B cell (primary cell): ENCODE measurements at regions of chr14 and their contacts with region 1.

Region 1: DNA sequence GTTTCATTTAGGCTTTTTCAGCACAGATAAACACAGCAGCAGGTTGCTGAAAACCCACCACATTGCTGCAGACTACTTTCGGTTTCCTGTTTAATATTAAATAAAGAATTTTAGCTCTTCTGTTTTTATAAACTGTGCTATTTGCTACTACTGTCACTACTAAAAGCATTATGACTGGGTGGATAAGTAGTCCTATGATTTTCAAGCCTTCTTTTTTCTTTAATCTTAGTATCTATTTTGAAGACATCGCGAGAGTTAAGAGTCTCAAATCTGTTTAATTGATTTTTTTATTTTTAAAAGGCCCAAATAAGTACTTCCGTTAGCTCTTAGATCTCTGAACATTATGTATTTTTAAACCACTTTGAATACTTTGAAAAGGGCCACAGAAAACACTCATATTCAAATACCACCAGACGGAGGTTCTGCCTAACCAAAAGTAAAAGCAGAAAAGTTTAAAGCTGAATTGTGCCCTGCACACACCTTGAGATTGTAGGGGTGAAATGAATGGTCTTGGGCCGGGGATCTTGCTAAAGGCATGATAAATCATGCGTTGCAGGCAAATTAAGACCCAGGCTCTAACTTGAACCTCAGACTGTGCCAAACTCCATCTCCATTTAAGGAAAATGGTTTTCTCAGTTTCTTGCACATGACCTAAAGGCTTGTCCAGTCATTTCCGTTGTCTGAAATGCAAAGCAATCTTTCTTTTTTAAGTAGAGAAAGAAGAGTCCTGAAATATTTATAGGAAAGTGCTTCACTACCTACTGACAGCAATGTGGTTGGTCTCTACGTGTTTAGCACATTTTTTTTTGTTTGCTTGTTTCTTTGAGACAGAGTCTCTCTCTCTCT is 13.6 kb upstream of the FOXN3 start:
- DNase-seq: peak; percentile 93
- ATAC-seq: peak; percentile 92
- H3K4me3 ChIP-seq: peak overlapping the region; percentile 49 to 88 (median 64)
- H3K4me3 Mint-ChIP-seq: peak overlapping the region; percentile 86
- H3K27ac ChIP-seq: peak overlapping the region; percentile 82 to 86
- H3K27ac Mint-ChIP-seq: peak overlapping the region; percentile 86
- H3K4me1 ChIP-seq: peaks cover 69 to 76% of the 10 kb centered on the region in 2 donors
- H3K4me1 Mint-ChIP-seq: peaks cover 71% of the 10 kb centered on the region
- H3K27me3 ChIP-seq: no peaks in the 10 kb centered on the region
- H3K27me3 Mint-ChIP-seq: no peaks in the 10 kb centered on the region
- CTCF ChIP-seq: no peak

Region 2: GRCh38 chr14:89303457-89304435 is 126.9 kb before region 1 on chr14:
- CTCF ChIA-PET with region 1: no interaction called
- POLR2A ChIA-PET with region 1: interaction called, 4 read pairs
- intact Hi-C with region 1: loop called (anchors 1 kb)
- DNase-seq: peak; percentile 90
- ATAC-seq: peak; percentile 69
- H3K4me3 ChIP-seq: peak overlapping the region; percentile 26 to 61 (median 47)
- H3K4me3 Mint-ChIP-seq: peak overlapping the region; percentile 95
- H3K27ac ChIP-seq: peak overlapping the region; percentile 93 to 99
- H3K27ac Mint-ChIP-seq: peak overlapping the region; percentile 100
- H3K4me1 ChIP-seq: peaks cover 66 to 75% of the 10 kb centered on the region in 2 donors
- H3K4me1 Mint-ChIP-seq: peaks cover 77% of the 10 kb centered on the region
- H3K27me3 ChIP-seq: no peaks in the 10 kb centered on the region
- H3K27me3 Mint-ChIP-seq: no peaks in the 10 kb centered on the region
- CTCF ChIP-seq: no peak

Region 3: GRCh38 chr14:89365061-89365801 is 65.4 kb before region 1 on chr14:
- CTCF ChIA-PET with region 1: no interaction called
- POLR2A ChIA-PET with region 1: no interaction called
- intact Hi-C with region 1: loop called (anchors 1 kb)
- DNase-seq: peak; percentile 87
- ATAC-seq: peak; percentile 93
- H3K4me3 ChIP-seq: peak overlapping the region; percentile 29 to 60 (median 51)
- H3K4me3 Mint-ChIP-seq: peak overlapping the region; percentile 84
- H3K27ac ChIP-seq: peak overlapping the region; percentile 86 to 92
- H3K27ac Mint-ChIP-seq: peak overlapping the region; percentile 90
- H3K4me1 ChIP-seq: peaks cover 43 to 52% of the 10 kb centered on the region in 2 donors
- H3K4me1 Mint-ChIP-seq: peaks cover 57% of the 10 kb centered on the region
- H3K27me3 ChIP-seq: no peaks in the 10 kb centered on the region
- H3K27me3 Mint-ChIP-seq: no peaks in the 10 kb centered on the region
- CTCF ChIP-seq: no peak

Region 4: GRCh38 chr14:89445273-89445973 is 14.8 kb after region 1 on chr14:
- CTCF ChIA-PET with region 1: interaction called, 3 read pairs
- POLR2A ChIA-PET with region 1: no interaction called
- intact Hi-C with region 1: loop called (anchors 1 kb)
- DNase-seq: peak; percentile 40
- ATAC-seq: peak; percentile 50
- H3K4me3 ChIP-seq: no peak overlapping the region
- H3K4me3 Mint-ChIP-seq: peak overlapping the region; percentile 45
- H3K27ac ChIP-seq: peak overlapping the region; percentile 71 to 89
- H3K27ac Mint-ChIP-seq: peak overlapping the region; percentile 75
- H3K4me1 ChIP-seq: peaks cover 61 to 70% of the 10 kb centered on the region in 2 donors
- H3K4me1 Mint-ChIP-seq: peaks cover 74% of the 10 kb centered on the region
- H3K27me3 ChIP-seq: no peaks in the 10 kb centered on the region
- H3K27me3 Mint-ChIP-seq: no peaks in the 10 kb centered on the region
- CTCF ChIP-seq: no peak

Region 5: GRCh38 chr14:89493877-89494634 is 63.4 kb after region 1 on chr14:
- CTCF ChIA-PET with region 1: no interaction called
- POLR2A ChIA-PET with region 1: interaction called, 5 read pairs
- intact Hi-C with region 1: loop called (anchors 1 kb)
- DNase-seq: peak; percentile 92
- ATAC-seq: peak; percentile 99
- H3K4me3 ChIP-seq: peak overlapping the region in 4 of 5 experiments; percentile 3 to 46 (median 22)
- H3K4me3 Mint-ChIP-seq: peak overlapping the region; percentile 74
- H3K27ac ChIP-seq: peak overlapping the region; percentile 35 to 77
- H3K27ac Mint-ChIP-seq: peak overlapping the region; percentile 76
- H3K4me1 ChIP-seq: peaks cover 20 to 21% of the 10 kb centered on the region in 2 donors
- H3K4me1 Mint-ChIP-seq: peaks cover 29% of the 10 kb centered on the region
- H3K27me3 ChIP-seq: no peaks in the 10 kb centered on the region
- H3K27me3 Mint-ChIP-seq: no peaks in the 10 kb centered on the region
- CTCF ChIP-seq: no peak

Region 6: GRCh38 chr14:89701211-89702043 is 270.8 kb after region 1 on chr14:
- CTCF ChIA-PET with region 1: no interaction called
- POLR2A ChIA-PET with region 1: interaction called, 3 read pairs
- intact Hi-C with region 1: loop called (anchors 1 kb)
- DNase-seq: peak; percentile 90
- ATAC-seq: peak; percentile 96
- H3K4me3 ChIP-seq: peak overlapping the region; percentile 4 to 80 (median 62)
- H3K4me3 Mint-ChIP-seq: peak overlapping the region; percentile 88
- H3K27ac ChIP-seq: peak overlapping the region; percentile 28 to 71
- H3K27ac Mint-ChIP-seq: peak overlapping the region; percentile 85
- H3K4me1 ChIP-seq: peaks cover 25% of the 10 kb centered on the region in 2 donors
- H3K4me1 Mint-ChIP-seq: peaks cover 25% of the 10 kb centered on the region
- H3K27me3 ChIP-seq: no peaks in the 10 kb centered on the region
- H3K27me3 Mint-ChIP-seq: no peaks in the 10 kb centered on the region
- CTCF ChIP-seq: no peak

Region 7: DNA sequence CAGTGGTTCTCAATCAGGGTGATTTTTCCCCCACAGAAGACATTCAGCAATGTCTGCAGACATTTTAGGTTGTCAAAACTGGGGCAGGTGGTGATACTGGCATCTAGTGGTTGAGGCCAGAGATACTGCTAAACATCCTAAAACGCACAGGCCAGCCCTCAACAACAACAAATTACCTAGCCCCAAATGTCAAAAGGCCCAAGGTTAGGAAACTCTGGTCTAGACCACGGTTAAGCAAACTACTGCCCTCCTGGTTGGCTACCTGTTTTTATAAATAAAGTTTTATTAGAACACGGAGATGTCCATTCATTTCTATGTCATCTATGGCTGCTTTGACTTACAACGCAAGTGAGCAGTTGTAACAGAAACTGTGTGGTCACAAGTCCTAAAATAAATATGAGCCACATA is 337.3 kb after region 1 on chr14:
- CTCF ChIA-PET with region 1: interaction called, 3 read pairs
- POLR2A ChIA-PET with region 1: no interaction called
- intact Hi-C with region 1: loop called (anchors 5 kb)
- DNase-seq: peak; percentile 83
- ATAC-seq: peak; percentile 88
- H3K4me3 ChIP-seq: peak overlapping the region in 1 of 5 experiments; percentile 23
- H3K4me3 Mint-ChIP-seq: peak overlapping the region; percentile 26
- H3K27ac ChIP-seq: peak overlapping the region in 1 of 2 donors; percentile 52
- H3K27ac Mint-ChIP-seq: peak overlapping the region; percentile 54
- H3K4me1 ChIP-seq: peaks cover 17 to 19% of the 10 kb centered on the region in 2 donors
- H3K4me1 Mint-ChIP-seq: peaks cover 29% of the 10 kb centered on the region
- H3K27me3 ChIP-seq: no peaks in the 10 kb centered on the region
- H3K27me3 Mint-ChIP-seq: no peaks in the 10 kb centered on the region
- CTCF ChIP-seq: peak; percentile 82